ENCODE measurements at regions of chr19 and their contacts with region 1.

Region 1: DNA sequence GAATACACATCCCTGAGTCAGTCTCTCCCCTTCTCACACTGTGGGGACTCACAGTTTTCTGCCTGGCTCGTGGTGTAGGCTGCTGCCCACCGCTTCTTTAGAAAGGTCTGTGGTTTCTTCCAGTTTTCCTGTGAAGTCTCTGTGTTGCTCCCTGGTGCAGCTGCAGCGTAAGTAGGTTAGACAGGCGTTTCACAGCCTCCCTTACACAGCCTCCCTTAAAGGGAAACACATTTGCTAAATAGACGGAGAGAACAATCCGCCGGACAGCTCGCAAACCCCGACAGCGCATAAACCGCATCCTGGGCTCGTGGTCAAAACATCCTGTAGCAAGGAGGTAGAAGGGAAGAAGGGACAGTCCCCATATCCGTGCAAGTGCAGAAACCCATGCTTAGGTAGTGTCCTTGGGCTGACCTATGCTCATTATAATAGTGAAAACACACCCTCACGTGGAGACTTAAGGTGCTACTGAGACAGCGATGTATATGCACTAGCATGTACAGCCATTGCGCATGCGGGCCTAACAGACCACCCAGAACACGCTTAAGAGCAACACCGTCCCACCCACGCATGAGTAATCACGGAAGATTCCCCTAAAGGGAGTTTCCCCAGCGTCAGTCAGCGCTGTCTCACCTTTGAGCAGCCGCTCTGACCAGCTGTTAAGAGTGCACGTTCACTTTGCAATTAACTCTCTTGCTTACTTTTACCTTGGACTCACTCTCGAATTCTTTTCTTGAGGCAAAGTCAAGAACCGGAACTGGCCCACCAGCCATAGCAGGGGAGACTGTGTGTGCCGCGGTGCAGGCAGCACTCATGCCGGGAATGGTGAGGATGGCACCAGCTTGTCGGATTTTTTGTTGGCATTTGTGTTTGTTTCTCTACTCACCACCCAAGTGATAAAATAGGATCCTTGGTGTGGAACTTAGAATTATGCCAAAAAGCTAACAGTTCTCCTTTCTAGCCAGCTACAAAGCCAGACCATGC is 16.6 kb downstream of the SIGLEC8 start:
- DNase-seq: no peak
- H3K4me3 ChIP-seq: no peak overlapping the region
- H3K27ac ChIP-seq: no peak overlapping the region
- H3K4me1 ChIP-seq: no peaks in the 10 kb centered on the region
- H3K27me3 ChIP-seq: peaks cover 0 to 45% of the 10 kb centered on the region in 2 donors
- CTCF ChIP-seq: no peak
- POLR2A ChIP-seq: no peak

Region 2: GRCh38 chr19:51367565-51368365 is 73.9 kb before region 1 on chr19:
- intact Hi-C with region 1: loop called (anchors 2 kb)
- DNase-seq: peak; percentile 97 to 99
- H3K4me3 ChIP-seq: peak overlapping the region; percentile 58 to 84 (median 82)
- H3K27ac ChIP-seq: peak overlapping the region; percentile 94
- H3K4me1 ChIP-seq: no peaks in the 10 kb centered on the region
- H3K27me3 ChIP-seq: no peaks in the 10 kb centered on the region
- CTCF ChIP-seq: no peak
- POLR2A ChIP-seq: no peak